ENCODE measurements at regions of chr5 and their contacts with region 1.

Region 1: DNA sequence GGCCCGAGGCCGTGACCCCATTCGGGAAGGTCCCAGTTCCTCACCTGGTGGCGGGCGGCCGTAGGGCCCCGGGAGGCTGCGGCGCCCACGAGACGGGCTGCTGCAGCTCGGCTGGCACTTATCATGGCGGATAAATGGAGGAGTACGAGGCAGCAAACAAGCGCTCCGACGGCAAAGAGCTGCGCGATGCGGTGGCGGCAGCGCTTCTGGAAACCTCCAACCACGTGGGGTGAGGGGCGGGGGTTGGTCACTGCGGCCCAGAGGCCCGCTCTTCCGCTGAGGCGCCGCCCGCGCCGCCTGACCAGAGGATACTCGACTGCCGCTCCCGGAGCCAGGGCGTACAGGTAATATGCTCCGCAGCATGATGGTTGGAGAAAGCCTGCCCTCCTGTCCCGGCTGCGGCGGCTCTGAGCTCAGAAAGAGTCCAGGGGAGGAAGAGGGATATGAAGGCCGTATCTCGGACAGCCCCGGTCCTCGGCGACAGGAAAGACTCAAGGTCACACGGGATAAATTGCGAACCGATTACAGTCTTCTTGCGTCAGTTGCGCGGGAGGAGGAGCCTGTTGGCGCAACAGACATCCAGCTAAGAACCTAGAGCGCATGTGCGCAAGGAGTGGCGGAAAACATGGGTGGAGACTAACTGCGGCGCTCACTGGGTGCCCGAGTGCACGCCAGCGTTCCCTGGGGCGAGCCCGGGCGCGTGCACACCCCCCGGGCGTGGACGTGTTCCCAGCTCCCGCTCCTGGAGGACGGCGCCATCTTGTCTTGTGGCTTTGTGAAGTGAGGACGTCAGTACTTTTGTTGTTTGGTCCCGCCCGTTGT is at the start of gene HSPA9:
- DNase-seq: peak; percentile 87 to 99 (median 97)
- ATAC-seq: peak; percentile 85 to 86
- H3K4me3 Mint-ChIP-seq: peak within 1 kb of the TSS; percentile 93 to 99 (median 98)
- H3K27ac Mint-ChIP-seq: peak within 1 kb of the TSS; percentile 99 to 100 (median 100)
- H3K4me1 Mint-ChIP-seq: peaks cover 16 to 45% (median 33%) of the 10 kb centered on the region in 4 donors
- H3K27me3 Mint-ChIP-seq: no peaks in the 10 kb centered on the region
- polyA plus RNA-seq, gene HSPA9: 130 to 164 (median 140) TPM

Region 2: GRCh38 chr5:138337685-138338410 is 237.6 kb before region 1 on chr5 and contains the start of gene FAM53C:
- POLR2A ChIA-PET with region 1: interaction called, 10 read pairs
- DNase-seq: peak; percentile 82 to 100 (median 94)
- ATAC-seq: peak; percentile 86 to 87
- H3K4me3 Mint-ChIP-seq: peak within 1 kb of the TSS; percentile 89 to 97 (median 93)
- H3K27ac Mint-ChIP-seq: peak within 1 kb of the TSS; percentile 98 to 100 (median 100)
- H3K4me1 Mint-ChIP-seq: peaks cover 22 to 42% (median 41%) of the 10 kb centered on the region in 4 donors
- H3K27me3 Mint-ChIP-seq: no peaks in the 10 kb centered on the region
- polyA plus RNA-seq, gene FAM53C: 18.6 to 22.2 (median 20.3) TPM

Region 3: DNA sequence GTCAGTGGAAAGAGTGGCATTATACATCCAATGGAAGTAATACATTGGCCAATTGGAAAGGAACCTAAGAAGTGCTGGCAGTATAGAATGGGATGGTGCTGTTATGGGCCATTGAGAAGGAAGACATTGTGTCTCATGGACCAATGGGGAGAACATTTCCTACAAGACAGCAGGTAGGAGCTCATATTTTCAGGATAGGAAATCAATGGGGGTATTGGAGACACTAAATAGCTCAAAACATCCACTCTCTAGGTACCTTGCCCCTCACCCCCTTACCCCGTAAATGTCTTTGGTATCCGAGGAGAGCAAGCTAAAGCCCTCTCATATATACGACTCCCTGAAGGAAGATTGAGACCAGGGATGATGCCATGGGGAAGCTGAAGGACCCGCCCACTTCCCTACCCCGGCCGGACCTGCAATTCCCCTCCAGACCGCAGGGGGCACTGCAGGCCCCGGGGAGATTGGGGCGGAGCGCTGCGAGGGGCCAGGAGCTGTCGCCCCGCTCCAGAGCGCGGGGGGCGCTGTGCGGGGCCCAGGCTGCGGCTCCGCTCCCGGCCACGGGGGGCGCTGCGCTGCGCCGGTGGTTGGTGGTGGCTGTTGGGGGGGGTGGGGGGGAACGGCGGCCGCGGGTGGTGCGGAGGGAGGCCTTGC is 223.2 kb before region 1 on chr5 and contains the start of gene KDM3B:
- POLR2A ChIA-PET with region 1: interaction called, 12 read pairs
- DNase-seq: peak; percentile 88 to 98 (median 93)
- ATAC-seq: peak; percentile 69 to 81
- H3K4me3 Mint-ChIP-seq: peak within 1 kb of the TSS; percentile 90 to 100 (median 96)
- H3K27ac Mint-ChIP-seq: peak within 1 kb of the TSS; percentile 93 to 98 (median 95)
- H3K4me1 Mint-ChIP-seq: peaks cover 27 to 54% (median 47%) of the 10 kb centered on the region in 4 donors
- H3K27me3 Mint-ChIP-seq: no peaks in the 10 kb centered on the region
- polyA plus RNA-seq, gene KDM3B: 6.9 to 12.3 (median 10.6) TPM

Region 4: DNA sequence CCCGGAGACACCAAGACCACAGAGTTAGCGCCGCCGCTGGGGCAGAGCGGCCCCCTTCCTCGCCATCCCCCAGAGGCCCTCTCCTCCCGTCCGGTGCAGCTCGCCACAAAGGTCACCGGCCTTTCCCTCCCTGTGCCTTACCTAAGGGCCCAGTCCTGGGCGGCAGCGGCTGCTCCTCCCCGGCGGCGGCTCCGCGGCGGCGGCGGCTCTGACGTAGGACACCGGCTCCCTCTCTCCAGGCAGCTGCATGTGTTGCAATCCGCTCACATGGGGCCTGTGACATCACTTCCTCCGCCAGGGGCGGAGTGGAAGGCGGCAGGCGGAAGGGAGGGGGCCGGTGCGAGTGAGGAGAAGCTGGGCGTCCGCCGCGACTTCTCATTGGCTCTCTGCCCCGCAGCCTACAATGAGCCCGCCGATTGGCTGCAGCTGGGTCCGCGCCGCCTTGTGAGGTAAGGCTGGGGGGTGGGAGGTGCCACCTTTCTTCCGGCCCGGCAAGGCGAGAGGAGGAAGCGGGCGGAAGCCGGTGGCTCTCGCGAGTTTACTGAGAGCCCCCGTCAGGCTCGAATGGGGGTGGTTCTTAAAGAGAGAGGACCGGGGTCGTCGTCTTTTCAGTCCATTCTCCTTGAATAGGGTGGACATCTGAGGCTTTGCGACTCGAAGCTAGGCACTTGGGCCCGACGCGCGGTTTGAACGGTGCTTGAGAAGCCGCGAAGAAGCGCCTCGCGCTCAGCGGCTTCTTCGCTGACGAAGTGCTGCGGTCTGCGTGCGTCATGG is 32.3 kb before region 1 on chr5 and contains the start of gene ETF1:
- POLR2A ChIA-PET with region 1: interaction called, 65 read pairs
- DNase-seq: peak; percentile 97 to 100 (median 100)
- ATAC-seq: peak; percentile 86 to 87
- H3K4me3 Mint-ChIP-seq: peak within 1 kb of the TSS; percentile 94 to 100 (median 100)
- H3K27ac Mint-ChIP-seq: peak within 1 kb of the TSS; percentile 99 to 100 (median 100)
- H3K4me1 Mint-ChIP-seq: peaks cover 35 to 79% (median 74%) of the 10 kb centered on the region in 4 donors
- H3K27me3 Mint-ChIP-seq: no peaks in the 10 kb centered on the region
- polyA plus RNA-seq, gene ETF1: 21.5 to 27.5 (median 24.1) TPM

Region 5: GRCh38 chr5:138565100-138565821 is 10.1 kb before region 1 on chr5:
- POLR2A ChIA-PET with region 1: interaction called, 16 read pairs
- DNase-seq: peak in 4 of 10 donors; percentile 33 to 70 (median 66)
- ATAC-seq: peak; percentile 74 to 89
- H3K4me3 Mint-ChIP-seq: peak overlapping the region in 9 of 10 donors; percentile 8 to 82 (median 64)
- H3K27ac Mint-ChIP-seq: peak overlapping the region; percentile 50 to 98 (median 90)
- H3K4me1 Mint-ChIP-seq: peaks cover 17 to 60% (median 52%) of the 10 kb centered on the region in 4 donors
- H3K27me3 Mint-ChIP-seq: no peaks in the 10 kb centered on the region

Region 6: DNA sequence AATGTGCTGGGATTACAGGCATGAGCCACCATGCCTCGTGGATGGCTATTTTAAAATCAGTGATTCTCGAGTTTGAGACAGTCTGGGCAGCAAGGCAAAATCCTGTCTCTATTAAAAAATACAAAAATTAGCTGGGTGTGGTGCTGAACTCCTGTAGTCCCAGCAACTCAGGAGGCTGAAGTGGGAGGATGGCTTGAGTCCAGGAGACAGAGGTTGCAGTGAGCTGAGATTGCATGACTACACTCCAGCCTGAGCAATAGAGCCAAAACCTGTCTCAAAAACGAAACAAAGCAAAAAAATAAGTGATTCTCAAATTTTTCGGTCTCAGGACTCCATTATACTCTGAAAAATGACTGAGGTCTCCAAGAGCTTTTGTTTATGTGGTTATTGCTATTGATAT is 47.6 kb after region 1 on chr5:
- POLR2A ChIA-PET with region 1: no interaction called
- DNase-seq: no peak
- ATAC-seq: no peak
- H3K4me3 Mint-ChIP-seq: no peak overlapping the region
- H3K27ac Mint-ChIP-seq: no peak overlapping the region
- H3K4me1 Mint-ChIP-seq: peaks cover 0 to 2% (median 0%) of the 10 kb centered on the region in 4 donors
- H3K27me3 Mint-ChIP-seq: peaks cover 32 to 80% (median 53%) of the 10 kb centered on the region in 5 donors

Measured in naive thymus-derived CD8-positive, alpha-beta T cell (primary cell).